Activated CD4-positive, alpha-beta T cell treated with anti-CD3 and anti-CD28 coated beads for 36 hours (primary cell): ENCODE measurements at regions of chr2 and their contacts with region 1.

Region 1: GRCh38 chr2:39913648-39914461 is 134.8 kb upstream of the THUMPD2 start:
- DNase-seq: no peak
- ATAC-seq: peak; percentile 72
- H3K4me3 Mint-ChIP-seq: no peak overlapping the region
- H3K27ac Mint-ChIP-seq: peak overlapping the region; percentile 67
- H3K4me1 Mint-ChIP-seq: peaks cover 29% of the 10 kb centered on the region
- H3K27me3 Mint-ChIP-seq: peaks cover 11% of the 10 kb centered on the region

Region 2: DNA sequence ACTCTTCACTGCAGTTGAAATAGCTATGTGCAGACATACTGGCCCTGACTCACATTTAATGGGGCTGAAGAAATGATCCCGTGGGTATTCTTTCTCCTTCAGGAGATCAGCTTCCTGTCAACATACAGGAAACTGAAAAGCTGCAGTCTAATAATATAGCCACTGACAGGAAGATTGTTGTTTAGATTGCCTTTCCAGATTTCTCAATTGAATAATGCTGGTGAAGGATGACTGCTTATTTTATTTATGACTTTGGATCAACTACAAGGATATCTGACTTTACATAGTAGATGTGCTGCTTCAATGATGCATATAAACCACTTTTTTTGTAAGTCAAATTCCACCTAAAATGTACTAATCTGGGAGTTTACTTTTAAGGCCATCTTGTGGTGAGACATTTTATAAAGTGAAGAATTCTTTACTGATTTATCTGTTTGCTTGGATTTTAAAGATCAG is 383.4 kb before region 1 on chr2:
- CTCF ChIA-PET with region 1: no interaction called
- POLR2A ChIA-PET with region 1: no interaction called
- intact Hi-C with region 1: no loop called
- DNase-seq: no peak
- ATAC-seq: no peak
- H3K4me3 Mint-ChIP-seq: no peak overlapping the region
- H3K27ac Mint-ChIP-seq: no peak overlapping the region
- H3K4me1 Mint-ChIP-seq: no peaks in the 10 kb centered on the region
- H3K27me3 Mint-ChIP-seq: peaks cover 3% of the 10 kb centered on the region

Region 3: GRCh38 chr2:39948016-39948719 is 34.3 kb after region 1 on chr2:
- CTCF ChIA-PET with region 1: no interaction called
- POLR2A ChIA-PET with region 1: no interaction called
- intact Hi-C with region 1: loop called in 1 of 2 experiments (anchors 1 kb)
- DNase-seq: no peak
- ATAC-seq: peak; percentile 63
- H3K4me3 Mint-ChIP-seq: peak overlapping the region; percentile 0
- H3K27ac Mint-ChIP-seq: peak overlapping the region; percentile 91
- H3K4me1 Mint-ChIP-seq: peaks cover 49% of the 10 kb centered on the region
- H3K27me3 Mint-ChIP-seq: peaks cover 3% of the 10 kb centered on the region

Region 4: DNA sequence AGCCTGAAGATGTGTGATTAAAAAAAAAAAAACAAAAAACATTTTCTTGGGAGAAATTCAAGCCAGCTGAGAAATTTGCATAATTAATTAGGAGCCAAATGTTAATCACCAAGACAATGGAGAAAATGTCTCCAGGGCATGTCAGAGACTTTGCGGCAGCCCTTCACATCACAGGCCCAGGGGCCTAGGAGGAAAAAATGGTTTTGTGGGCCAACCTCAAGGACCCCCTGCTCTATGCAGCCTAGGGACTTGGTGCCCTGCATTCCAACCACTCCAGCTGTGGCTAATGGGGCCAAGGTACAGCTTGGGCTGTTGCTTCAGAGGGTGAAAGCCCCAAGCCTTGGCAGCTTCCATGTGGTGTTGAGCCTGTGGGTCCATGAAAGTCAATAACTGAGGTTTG is 107.1 kb after region 1 on chr2:
- CTCF ChIA-PET with region 1: no interaction called
- POLR2A ChIA-PET with region 1: no interaction called
- intact Hi-C with region 1: no loop called
- DNase-seq: no peak
- ATAC-seq: no peak
- H3K4me3 Mint-ChIP-seq: no peak overlapping the region
- H3K27ac Mint-ChIP-seq: no peak overlapping the region
- H3K4me1 Mint-ChIP-seq: no peaks in the 10 kb centered on the region
- H3K27me3 Mint-ChIP-seq: peaks cover 4% of the 10 kb centered on the region

Region 5: DNA sequence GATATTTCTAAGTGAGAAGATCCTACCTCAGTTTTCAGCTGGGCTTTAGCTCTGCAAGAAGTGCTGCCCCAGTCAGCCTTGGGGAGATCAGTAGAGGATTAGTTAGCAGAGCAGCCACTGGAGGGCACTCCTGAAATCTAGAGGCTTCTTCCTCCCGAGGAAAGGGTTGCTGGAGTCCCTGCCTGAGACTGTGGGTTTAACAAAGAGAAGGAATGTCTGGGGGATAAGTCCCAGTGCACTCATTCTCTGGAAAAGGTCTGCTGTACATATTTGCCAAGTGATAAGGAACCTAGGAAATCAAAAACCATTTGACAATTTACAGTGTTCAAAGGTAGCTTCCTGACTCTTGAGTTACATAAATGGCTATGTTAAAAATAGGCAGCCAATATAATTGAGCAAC is 330.8 kb after region 1 on chr2:
- CTCF ChIA-PET with region 1: no interaction called
- POLR2A ChIA-PET with region 1: no interaction called
- intact Hi-C with region 1: loop called in 1 of 2 experiments (anchors 10 kb)
- DNase-seq: peak; percentile 41
- ATAC-seq: peak; percentile 36
- H3K4me3 Mint-ChIP-seq: no peak overlapping the region
- H3K27ac Mint-ChIP-seq: no peak overlapping the region
- H3K4me1 Mint-ChIP-seq: no peaks in the 10 kb centered on the region
- H3K27me3 Mint-ChIP-seq: peaks cover 4% of the 10 kb centered on the region

Region 6: GRCh38 chr2:40279001-40279400 is 365.1 kb after region 1 on chr2:
- CTCF ChIA-PET with region 1: no interaction called
- POLR2A ChIA-PET with region 1: no interaction called
- intact Hi-C with region 1: no loop called
- DNase-seq: no peak
- ATAC-seq: no peak
- H3K4me3 Mint-ChIP-seq: no peak overlapping the region
- H3K27ac Mint-ChIP-seq: no peak overlapping the region
- H3K4me1 Mint-ChIP-seq: no peaks in the 10 kb centered on the region
- H3K27me3 Mint-ChIP-seq: no peaks in the 10 kb centered on the region

Region 7: GRCh38 chr2:40554668-40555285 is 640.9 kb after region 1 on chr2:
- CTCF ChIA-PET with region 1: interaction called, 24 read pairs
- POLR2A ChIA-PET with region 1: no interaction called
- intact Hi-C with region 1: loop called (anchors 1 kb)
- DNase-seq: peak; percentile 75
- ATAC-seq: peak; percentile 76
- H3K4me3 Mint-ChIP-seq: no peak overlapping the region
- H3K27ac Mint-ChIP-seq: no peak overlapping the region
- H3K4me1 Mint-ChIP-seq: no peaks in the 10 kb centered on the region
- H3K27me3 Mint-ChIP-seq: peaks cover 2% of the 10 kb centered on the region

Region 8: GRCh38 chr2:41400088-41400665 is 1486.3 kb after region 1 on chr2:
- CTCF ChIA-PET with region 1: no interaction called
- POLR2A ChIA-PET with region 1: no interaction called
- intact Hi-C with region 1: loop called in 1 of 2 experiments (anchors 5 kb)
- DNase-seq: peak; percentile 22
- ATAC-seq: no peak
- H3K4me3 Mint-ChIP-seq: no peak overlapping the region
- H3K27ac Mint-ChIP-seq: no peak overlapping the region
- H3K4me1 Mint-ChIP-seq: no peaks in the 10 kb centered on the region
- H3K27me3 Mint-ChIP-seq: no peaks in the 10 kb centered on the region

Region 9: DNA sequence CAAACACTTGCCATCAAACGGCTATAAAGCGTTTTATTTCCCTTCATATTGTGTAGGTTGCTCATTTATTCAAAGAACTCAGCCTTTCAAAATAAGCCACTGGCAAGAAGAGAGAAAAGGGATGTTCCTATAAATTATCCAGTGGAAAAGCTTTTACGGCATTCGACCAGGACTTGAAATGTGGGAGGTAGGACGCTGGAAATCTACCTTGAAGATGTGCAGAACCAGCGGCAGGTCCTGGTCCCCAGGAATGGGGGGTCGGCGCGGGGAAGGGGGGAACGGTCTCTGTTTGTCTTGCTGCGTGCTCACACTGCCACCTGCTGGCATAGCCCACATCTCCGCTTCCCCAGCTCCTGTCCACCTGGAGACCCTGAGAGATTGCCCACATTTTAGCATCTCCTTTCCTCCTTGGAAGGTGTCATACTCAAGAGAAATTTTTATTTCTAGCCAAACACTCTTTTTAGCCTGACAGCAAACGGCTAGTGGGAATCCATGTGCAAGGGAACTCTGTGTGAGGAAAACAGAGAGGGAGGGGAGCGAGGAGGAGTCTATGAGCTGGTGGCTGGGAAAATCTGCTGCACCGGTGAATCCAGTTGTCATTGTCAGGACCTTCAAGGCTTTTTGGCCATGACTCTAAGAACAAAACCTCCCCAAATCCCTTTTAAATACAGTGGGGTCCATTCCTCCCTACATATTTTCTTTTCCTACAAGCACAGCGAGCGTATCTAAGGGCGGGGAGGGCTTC is 1785.0 kb after region 1 on chr2:
- CTCF ChIA-PET with region 1: interaction called, 4 read pairs
- POLR2A ChIA-PET with region 1: no interaction called
- intact Hi-C with region 1: loop called (anchors 1 to 2 kb)
- DNase-seq: peak; percentile 50
- ATAC-seq: no peak
- H3K4me3 Mint-ChIP-seq: no peak overlapping the region
- H3K27ac Mint-ChIP-seq: no peak overlapping the region
- H3K4me1 Mint-ChIP-seq: no peaks in the 10 kb centered on the region
- H3K27me3 Mint-ChIP-seq: peaks cover 5% of the 10 kb centered on the region